ENCODE measurements at regions of chr3 and their contacts with region 1.

Region 1: GRCh38 chr3:15427182-15427880 is at the starts of genes EAF1 and METTL6:
- DNase-seq: peak; percentile 71 to 85 (median 84)
- ATAC-seq: peak; percentile 89
- H3K4me3 ChIP-seq: peak within 1 kb of the TSS; percentile 81
- H3K4me3 Mint-ChIP-seq: peak within 1 kb of the TSS; percentile 91 to 100 (median 98)
- H3K27ac ChIP-seq: peak within 1 kb of the TSS; percentile 91
- H3K27ac Mint-ChIP-seq: peak within 1 kb of the TSS; percentile 86 to 99 (median 94)
- H3K4me1 ChIP-seq: peaks cover 18 to 23% of the 10 kb centered on the region in 2 donors
- H3K4me1 Mint-ChIP-seq: peaks cover 47 to 82% (median 62%) of the 10 kb centered on the region in 7 donors
- H3K27me3 ChIP-seq: no peaks in the 10 kb centered on the region
- H3K27me3 Mint-ChIP-seq: no peaks in the 10 kb centered on the region
- total RNA-seq, gene EAF1: 17.8 to 61.9 (median 27.8) TPM
- total RNA-seq, gene METTL6: 7.9 to 23.0 (median 18.3) TPM

Region 2: GRCh38 chr3:14651440-14652251 is 775.7 kb before region 1 on chr3 and contains the start of gene CCDC174:
- CTCF ChIA-PET with region 1: interaction called, 3 read pairs
- POLR2A ChIA-PET with region 1: no interaction called
- intact Hi-C with region 1: loop called in 1 of 2 experiments (anchors 5 kb)
- DNase-seq: peak; percentile 84 to 98 (median 96)
- ATAC-seq: peak; percentile 99
- H3K4me3 ChIP-seq: peak within 1 kb of the TSS; percentile 90
- H3K4me3 Mint-ChIP-seq: peak within 1 kb of the TSS; percentile 84 to 100 (median 96)
- H3K27ac ChIP-seq: peak within 1 kb of the TSS; percentile 94
- H3K27ac Mint-ChIP-seq: peak within 1 kb of the TSS; percentile 92 to 100 (median 98)
- H3K4me1 ChIP-seq: peaks cover 21 to 25% of the 10 kb centered on the region in 2 donors
- H3K4me1 Mint-ChIP-seq: peaks cover 25 to 80% (median 66%) of the 10 kb centered on the region in 7 donors
- H3K27me3 ChIP-seq: no peaks in the 10 kb centered on the region
- H3K27me3 Mint-ChIP-seq: peaks cover 0 to 2% (median 0%) of the 10 kb centered on the region in 5 donors
- total RNA-seq, gene CCDC174: 21.6 to 59.2 (median 46.2) TPM

Region 3: GRCh38 chr3:15098503-15099363 is 328.6 kb before region 1 on chr3 and contains the start of gene RBSN:
- CTCF ChIA-PET with region 1: no interaction called
- POLR2A ChIA-PET with region 1: no interaction called
- intact Hi-C with region 1: loop called (anchors 1 kb)
- DNase-seq: peak; percentile 87 to 96 (median 94)
- ATAC-seq: peak; percentile 87
- H3K4me3 ChIP-seq: peak within 1 kb of the TSS; percentile 83
- H3K4me3 Mint-ChIP-seq: peak within 1 kb of the TSS; percentile 90 to 99 (median 96)
- H3K27ac ChIP-seq: peak within 1 kb of the TSS; percentile 96
- H3K27ac Mint-ChIP-seq: peak within 1 kb of the TSS; percentile 90 to 99 (median 98)
- H3K4me1 ChIP-seq: peaks cover 8 to 14% of the 10 kb centered on the region in 2 donors
- H3K4me1 Mint-ChIP-seq: peaks cover 21 to 42% (median 30%) of the 10 kb centered on the region in 7 donors
- H3K27me3 ChIP-seq: no peaks in the 10 kb centered on the region
- H3K27me3 Mint-ChIP-seq: peaks cover 0 to 9% (median 2%) of the 10 kb centered on the region in 5 donors
- total RNA-seq, gene RBSN: 20.5 to 54.4 (median 39.6) TPM

Region 4: GRCh38 chr3:15460891-15461531 is 33.7 kb after region 1 on chr3:
- CTCF ChIA-PET with region 1: no interaction called
- POLR2A ChIA-PET with region 1: no interaction called
- intact Hi-C with region 1: no loop called
- DNase-seq: no peak
- ATAC-seq: peak; percentile 58
- H3K4me3 ChIP-seq: no peak overlapping the region
- H3K4me3 Mint-ChIP-seq: peak overlapping the region in 1 of 10 donors; percentile 12
- H3K27ac ChIP-seq: no peak overlapping the region
- H3K27ac Mint-ChIP-seq: peak overlapping the region in 1 of 9 donors; percentile 90
- H3K4me1 ChIP-seq: peaks cover 7 to 14% of the 10 kb centered on the region in 2 donors
- H3K4me1 Mint-ChIP-seq: peaks cover 6 to 29% (median 18%) of the 10 kb centered on the region in 7 donors
- H3K27me3 ChIP-seq: no peaks in the 10 kb centered on the region
- H3K27me3 Mint-ChIP-seq: no peaks in the 10 kb centered on the region

Region 5: DNA sequence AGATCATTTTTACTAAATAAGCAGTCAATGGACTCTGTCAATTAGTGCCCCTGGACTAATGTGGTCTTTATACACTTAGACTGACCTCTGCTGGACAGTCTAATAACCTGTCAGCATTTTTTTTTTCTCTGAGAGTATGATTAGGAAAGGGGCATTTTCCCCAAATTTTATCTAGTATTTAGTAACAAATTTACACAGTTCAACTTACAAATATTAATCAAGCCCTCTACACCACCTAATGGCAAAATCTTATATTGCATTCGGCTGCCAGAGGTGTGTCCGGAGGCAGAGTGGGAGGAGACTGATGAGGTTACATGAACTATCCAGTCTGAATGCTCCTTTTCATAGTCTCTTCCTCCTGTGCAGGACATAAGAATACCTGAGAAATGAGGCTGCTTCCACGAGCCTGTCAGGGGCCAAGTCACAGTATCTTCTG is 130.2 kb after region 1 on chr3:
- CTCF ChIA-PET with region 1: no interaction called
- POLR2A ChIA-PET with region 1: no interaction called
- intact Hi-C with region 1: loop called (anchors 1 kb)
- DNase-seq: peak; percentile 13 to 73 (median 62)
- ATAC-seq: peak; percentile 92
- H3K4me3 ChIP-seq: no peak overlapping the region
- H3K4me3 Mint-ChIP-seq: peak overlapping the region in 1 of 10 donors; percentile 0
- H3K27ac ChIP-seq: no peak overlapping the region
- H3K27ac Mint-ChIP-seq: peak overlapping the region in 2 of 9 donors; percentile 19 to 64
- H3K4me1 ChIP-seq: peaks cover 0 to 15% of the 10 kb centered on the region in 2 donors
- H3K4me1 Mint-ChIP-seq: peaks cover 0 to 35% (median 11%) of the 10 kb centered on the region in 7 donors
- H3K27me3 ChIP-seq: no peaks in the 10 kb centered on the region
- H3K27me3 Mint-ChIP-seq: no peaks in the 10 kb centered on the region

Region 6: GRCh38 chr3:15859507-15860013 is 432.2 kb after region 1 on chr3:
- CTCF ChIA-PET with region 1: no interaction called
- POLR2A ChIA-PET with region 1: no interaction called
- intact Hi-C with region 1: loop called (anchors 1 kb)
- DNase-seq: peak; percentile 57 to 86 (median 71)
- ATAC-seq: peak; percentile 91
- H3K4me3 ChIP-seq: peak overlapping the region; percentile 63
- H3K4me3 Mint-ChIP-seq: peak overlapping the region; percentile 85 to 99 (median 95)
- H3K27ac ChIP-seq: peak overlapping the region; percentile 77
- H3K27ac Mint-ChIP-seq: peak overlapping the region in 6 of 9 donors; percentile 76 to 98 (median 92)
- H3K4me1 ChIP-seq: peaks cover 12 to 14% of the 10 kb centered on the region in 2 donors
- H3K4me1 Mint-ChIP-seq: peaks cover 21 to 50% (median 43%) of the 10 kb centered on the region in 7 donors
- H3K27me3 ChIP-seq: no peaks in the 10 kb centered on the region
- H3K27me3 Mint-ChIP-seq: peaks cover 0 to 10% (median 0%) of the 10 kb centered on the region in 5 donors

Measured in naive thymus-derived CD4-positive, alpha-beta T cell (primary cell).